Cardiac septum (tissue), 1 donor: ENCODE measurements at regions of chr22 and their contacts with region 1.

Region 1: DNA sequence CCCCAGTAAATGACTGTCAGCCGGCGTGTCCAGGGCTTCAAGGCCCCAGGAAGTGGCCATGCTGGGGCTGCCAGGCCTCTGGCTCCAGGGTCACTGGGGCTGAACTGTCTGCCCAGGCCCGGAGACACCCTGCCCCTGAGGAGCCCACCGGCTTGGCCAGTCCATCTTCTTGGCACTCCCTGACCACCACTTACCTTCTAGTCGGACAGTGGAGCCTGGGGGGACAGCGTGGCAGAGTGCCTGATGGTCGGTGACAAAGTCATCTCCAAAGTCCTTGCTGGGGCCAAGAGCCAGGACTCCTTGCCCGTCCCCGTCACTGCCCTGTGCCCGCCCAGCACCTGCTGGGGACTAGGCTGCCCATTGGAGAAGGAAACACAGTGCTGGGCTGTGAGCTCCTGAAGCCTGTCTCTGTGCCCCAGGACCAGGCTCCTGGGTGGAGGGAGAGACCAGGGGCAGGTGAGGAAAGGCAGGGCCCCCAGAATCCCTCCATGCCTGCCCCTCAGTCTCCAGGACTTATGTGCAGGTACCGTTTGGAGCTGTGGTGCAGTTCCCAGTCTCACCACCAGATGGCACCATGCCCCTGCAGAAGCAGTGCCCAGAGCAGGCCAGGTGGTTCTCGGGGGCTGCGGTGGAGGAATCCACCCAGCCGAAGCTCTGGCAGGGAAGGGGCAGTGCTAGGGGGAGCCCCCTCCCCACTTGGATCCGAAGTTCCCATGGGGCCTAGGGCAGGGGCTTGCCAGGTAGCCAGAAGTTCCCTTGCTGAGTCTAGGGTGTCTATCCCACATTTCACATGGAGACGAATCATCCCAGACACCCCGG is 6.0 kb upstream of the CCDC188 start:
- DNase-seq: peak; percentile 87

Region 2: DNA sequence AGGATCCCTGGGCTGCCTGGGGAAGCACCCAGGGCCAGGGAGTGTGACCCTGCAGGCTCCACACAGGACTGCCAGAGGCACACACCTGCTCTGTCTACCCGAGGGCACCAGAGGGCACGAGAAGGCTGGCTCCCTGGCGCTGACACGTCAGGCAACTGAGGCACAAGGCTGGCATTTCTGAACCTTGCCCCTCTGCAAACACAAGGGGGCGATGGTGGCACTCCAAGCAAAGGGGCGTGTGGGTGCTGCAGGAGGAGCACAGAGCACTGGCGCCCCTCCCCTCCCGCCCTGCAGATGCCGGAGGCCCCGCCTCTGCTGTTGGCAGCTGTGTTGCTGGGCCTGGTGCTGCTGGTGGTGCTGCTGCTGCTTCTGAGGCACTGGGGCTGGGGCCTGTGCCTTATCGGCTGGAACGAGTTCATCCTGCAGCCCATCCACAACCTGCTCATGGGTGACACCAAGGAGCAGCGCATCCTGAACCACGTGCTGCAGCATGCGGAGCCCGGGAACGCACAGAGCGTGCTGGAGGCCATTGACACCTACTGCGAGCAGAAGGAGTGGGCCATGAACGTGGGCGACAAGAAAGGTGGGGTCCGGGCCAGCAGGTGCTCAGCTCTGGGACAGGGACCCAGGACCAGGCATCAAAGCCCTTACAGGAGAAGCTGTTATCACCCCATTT is 194.4 kb before region 1 on chr22:
- intact Hi-C with region 1: no loop called
- DNase-seq: no peak

Region 3: DNA sequence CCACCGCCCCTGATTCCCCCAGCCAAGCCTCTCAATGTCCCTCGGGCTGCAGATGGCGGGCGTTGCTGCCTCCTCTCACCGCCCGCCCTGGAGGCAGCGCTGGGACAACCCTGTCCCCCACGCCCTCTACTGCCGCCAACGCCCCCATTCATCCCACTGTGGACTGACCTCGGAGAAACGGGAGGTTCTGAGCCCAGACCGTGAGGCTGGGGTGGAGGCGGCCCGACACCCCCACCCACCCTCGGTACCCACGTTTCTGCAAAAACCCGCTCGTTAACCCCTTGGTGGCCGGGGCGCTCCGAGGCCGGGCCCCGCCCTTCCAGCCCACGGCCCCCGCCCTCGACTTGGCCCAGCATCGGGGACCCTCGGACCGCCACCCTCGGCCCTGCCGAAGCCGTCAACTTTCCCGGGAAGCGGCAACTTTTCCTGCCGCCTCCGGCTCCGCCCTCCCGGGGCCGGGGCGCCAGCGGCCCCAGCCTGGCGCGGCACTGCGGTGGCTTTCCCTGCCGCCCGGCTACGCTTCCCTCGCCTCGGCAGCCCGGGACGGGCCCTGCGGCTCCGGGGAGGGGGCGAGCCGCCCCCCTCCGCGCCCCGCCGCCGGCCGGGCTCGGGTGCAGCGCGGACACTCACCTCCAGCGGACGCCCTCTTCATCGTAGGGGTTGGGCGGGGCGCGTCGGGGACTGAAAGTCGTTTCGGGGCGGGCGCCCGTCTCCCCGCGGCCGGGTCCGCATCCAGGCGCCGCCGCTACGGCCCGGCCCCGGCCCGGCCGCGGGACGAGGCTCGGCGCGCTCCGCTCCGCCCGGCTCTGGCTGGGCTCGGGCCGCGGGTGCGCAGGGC is 110.8 kb after region 1 on chr22:
- intact Hi-C with region 1: loop called (anchors 1 kb)
- DNase-seq: no peak

Region 4: DNA sequence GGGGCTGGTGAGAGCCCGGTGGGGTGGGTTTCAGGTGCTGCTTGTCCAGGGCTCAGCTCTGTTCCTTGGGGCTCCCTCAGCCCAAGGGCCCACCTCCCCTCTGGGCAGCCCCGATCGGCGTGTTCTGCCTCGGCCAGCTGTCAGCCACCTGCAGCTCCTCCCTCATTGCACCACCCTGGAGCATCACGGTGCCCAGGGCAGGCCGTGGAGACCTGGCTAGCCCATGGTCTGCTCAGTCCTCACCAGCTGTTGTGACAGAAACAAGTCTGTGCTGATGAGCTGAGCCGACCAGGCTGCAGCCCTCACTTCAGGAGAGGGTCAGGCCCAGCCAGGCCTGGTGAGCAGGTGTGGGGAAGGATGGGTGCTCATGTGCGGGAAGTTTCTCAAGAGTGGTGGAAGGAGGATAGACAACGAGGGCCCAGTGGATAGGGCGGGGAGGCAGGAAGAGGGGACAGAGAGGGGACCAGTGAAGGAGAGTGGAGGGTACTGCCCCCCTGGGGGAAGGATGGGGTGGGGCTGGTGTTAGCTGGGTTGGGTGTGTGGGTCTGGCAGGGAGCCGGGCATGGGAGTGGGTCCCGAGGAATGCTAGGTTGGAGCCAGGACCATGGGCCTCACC is 127.8 kb after region 1 on chr22:
- intact Hi-C with region 1: loop called (anchors 1 kb)
- DNase-seq: no peak